ENCODE measurements at regions of chr17 and their contacts with region 1.

Region 1: GRCh38 chr17:79393358-79394202 is 217.3 kb downstream of the RBFOX3 start:
- DNase-seq: peak; percentile 6
- H3K4me3 ChIP-seq: no peak overlapping the region
- H3K27ac ChIP-seq: no peak overlapping the region
- H3K27me3 ChIP-seq: peaks cover 20% of the 10 kb centered on the region
- CTCF ChIP-seq: peak; percentile 84

Region 2: DNA sequence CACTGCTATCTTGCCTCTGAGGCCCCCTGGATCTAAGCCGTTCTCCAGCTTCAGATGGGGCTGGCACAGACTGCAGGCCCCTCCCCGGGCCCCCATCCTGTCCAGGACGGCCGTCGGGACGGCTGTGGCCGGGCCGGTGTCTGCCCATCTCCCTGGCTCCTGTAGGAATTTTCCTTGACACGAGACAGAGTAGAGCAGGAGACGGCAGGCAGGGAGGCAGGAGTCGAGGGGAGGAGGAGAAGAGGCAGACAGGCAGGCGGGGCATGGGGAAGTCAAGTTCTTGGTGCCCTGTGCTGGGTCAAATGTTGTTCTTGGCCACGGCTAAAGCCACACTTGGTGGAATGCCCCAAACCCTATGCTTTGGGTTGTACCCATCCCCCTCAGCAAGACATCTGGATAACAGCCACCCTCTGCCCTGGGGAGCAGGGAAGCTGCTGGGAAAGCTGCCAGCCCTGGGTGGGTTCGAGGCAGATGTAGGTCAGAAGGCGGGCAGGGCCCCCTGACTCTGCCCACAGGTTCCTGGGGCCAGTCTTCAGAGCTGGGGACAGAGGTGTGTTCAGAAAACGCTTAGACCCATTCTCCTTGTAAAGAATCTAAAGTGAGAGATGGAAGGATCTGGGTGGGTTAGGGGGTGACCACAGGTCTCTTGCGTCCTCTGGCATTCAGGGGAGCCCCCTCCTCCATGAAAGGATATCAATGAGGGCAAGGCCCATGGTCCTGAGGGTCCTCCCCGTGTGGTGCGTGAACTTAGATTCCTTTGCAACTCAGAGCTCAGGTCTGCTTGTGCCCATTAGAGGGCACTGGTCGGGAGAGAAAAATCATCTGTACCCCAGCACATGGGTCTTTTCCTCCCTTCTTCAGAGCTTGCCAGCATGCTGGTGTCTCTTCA is 365.4 kb before region 1 on chr17:
- CTCF ChIA-PET with region 1: interaction called, 10 read pairs
- POLR2A ChIA-PET with region 1: no interaction called
- DNase-seq: no peak
- H3K4me3 ChIP-seq: no peak overlapping the region
- H3K27ac ChIP-seq: no peak overlapping the region
- H3K27me3 ChIP-seq: no peaks in the 10 kb centered on the region
- CTCF ChIP-seq: peak; percentile 26; the same call in 1 of the 2 replicates

Region 3: DNA sequence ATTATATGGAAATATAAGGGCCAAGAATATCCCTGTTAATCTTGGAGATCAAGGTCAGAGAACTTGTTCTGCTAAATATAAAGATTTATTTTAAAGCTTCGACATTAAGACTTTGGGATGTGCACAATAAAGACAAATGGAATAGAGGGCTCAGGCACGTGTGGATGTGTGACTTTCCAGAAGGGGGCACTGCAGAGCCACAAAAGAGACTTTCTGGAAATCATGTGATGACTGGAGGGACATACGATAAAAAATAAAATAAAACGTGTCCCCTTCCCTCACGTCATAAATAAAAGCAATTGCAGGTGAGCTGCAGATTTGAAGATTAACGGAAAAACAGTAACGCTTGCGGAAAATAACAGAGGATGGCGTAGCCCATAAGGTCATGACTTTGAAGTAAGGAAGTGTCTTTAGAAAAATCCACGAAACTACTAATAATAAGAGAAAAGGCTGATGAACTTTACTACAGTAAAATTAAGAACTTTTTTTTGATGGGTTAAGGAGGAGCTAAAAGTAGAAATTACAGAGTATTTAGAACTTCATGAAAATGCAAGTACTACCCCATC is 328.4 kb before region 1 on chr17:
- CTCF ChIA-PET with region 1: interaction called, 29 read pairs
- POLR2A ChIA-PET with region 1: no interaction called
- DNase-seq: no peak
- H3K4me3 ChIP-seq: no peak overlapping the region
- H3K27ac ChIP-seq: no peak overlapping the region
- H3K27me3 ChIP-seq: peaks cover 3% of the 10 kb centered on the region
- CTCF ChIP-seq: peak; percentile 54

Region 4: GRCh38 chr17:79188048-79188447 is 205.5 kb before region 1 on chr17:
- CTCF ChIA-PET with region 1: interaction called, 10 read pairs
- POLR2A ChIA-PET with region 1: no interaction called
- DNase-seq: no peak
- H3K4me3 ChIP-seq: no peak overlapping the region
- H3K27ac ChIP-seq: no peak overlapping the region
- H3K27me3 ChIP-seq: peaks cover 32% of the 10 kb centered on the region
- CTCF ChIP-seq: peak; percentile 42

Region 5: GRCh38 chr17:79513820-79514535 is 120.4 kb after region 1 on chr17:
- CTCF ChIA-PET with region 1: no interaction called
- POLR2A ChIA-PET with region 1: no interaction called
- DNase-seq: no peak
- H3K4me3 ChIP-seq: no peak overlapping the region
- H3K27ac ChIP-seq: no peak overlapping the region
- H3K27me3 ChIP-seq: no peaks in the 10 kb centered on the region
- CTCF ChIP-seq: no peak

Region 6: DNA sequence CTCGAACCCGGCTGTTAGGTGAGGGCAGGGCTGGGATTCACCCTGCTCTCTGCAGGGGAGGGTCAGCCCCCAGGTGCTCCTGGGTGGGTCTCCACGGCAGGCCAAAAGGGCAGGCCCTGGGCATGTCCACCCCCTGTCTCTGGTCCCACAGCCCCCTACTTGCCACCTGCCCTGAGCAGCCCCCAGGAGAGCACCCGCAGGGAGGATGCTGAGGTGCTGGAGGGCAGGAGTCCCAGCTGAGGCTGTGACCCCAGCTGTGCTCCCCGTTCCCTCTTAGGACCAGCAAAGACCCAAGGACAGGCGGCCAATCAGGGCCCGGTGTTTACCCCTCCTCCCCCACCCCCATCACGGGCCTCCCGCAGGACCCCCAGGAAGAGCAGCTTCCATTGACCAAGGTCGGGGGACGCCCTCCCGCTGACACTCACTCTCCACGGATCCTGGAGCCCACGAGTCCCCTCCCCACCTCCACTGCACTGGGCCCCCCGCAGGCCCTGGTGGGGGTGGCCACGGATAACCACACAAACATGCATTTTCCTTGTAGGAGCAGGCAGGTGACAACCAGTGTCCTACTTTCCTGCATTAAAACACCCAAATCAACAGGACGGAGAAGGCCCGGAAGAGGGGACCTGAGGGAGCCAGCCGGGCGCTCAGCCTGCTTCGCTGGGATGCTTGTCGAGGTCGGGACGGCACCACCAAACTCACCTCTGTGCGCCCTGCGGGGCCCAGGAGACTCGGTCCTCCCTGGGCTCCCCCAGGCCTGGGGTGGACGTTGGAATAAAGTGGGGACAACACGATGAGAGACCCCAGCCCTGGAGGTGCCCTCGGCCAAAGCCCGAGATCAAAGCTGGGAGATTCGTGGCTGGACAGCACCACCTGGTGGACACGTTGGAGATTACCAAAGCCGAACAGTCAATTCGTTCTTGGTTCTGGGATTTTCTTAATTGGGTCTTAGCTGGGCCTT is 314.6 kb after region 1 on chr17:
- CTCF ChIA-PET with region 1: interaction called, 11 read pairs
- POLR2A ChIA-PET with region 1: no interaction called
- DNase-seq: no peak
- H3K4me3 ChIP-seq: peak overlapping the region; percentile 38
- H3K27ac ChIP-seq: no peak overlapping the region
- H3K27me3 ChIP-seq: peaks cover 3% of the 10 kb centered on the region
- CTCF ChIP-seq: peak; percentile 78